Activated CD8-positive, alpha-beta T cell treated with anti-CD3 and anti-CD28 coated beads for 36 hours (primary cell): ENCODE measurements at regions of chr1 and their contacts with region 1.

Region 1: GRCh38 chr1:234531151-234531635 is 52.2 kb upstream of the TARBP1 start:
- DNase-seq: no peak
- ATAC-seq: no peak
- H3K4me3 Mint-ChIP-seq: no peak overlapping the region
- H3K27ac Mint-ChIP-seq: no peak overlapping the region
- H3K4me1 Mint-ChIP-seq: peaks cover 14% of the 10 kb centered on the region
- H3K27me3 Mint-ChIP-seq: peaks cover 10% of the 10 kb centered on the region
- CTCF ChIP-seq: no peak

Region 2: DNA sequence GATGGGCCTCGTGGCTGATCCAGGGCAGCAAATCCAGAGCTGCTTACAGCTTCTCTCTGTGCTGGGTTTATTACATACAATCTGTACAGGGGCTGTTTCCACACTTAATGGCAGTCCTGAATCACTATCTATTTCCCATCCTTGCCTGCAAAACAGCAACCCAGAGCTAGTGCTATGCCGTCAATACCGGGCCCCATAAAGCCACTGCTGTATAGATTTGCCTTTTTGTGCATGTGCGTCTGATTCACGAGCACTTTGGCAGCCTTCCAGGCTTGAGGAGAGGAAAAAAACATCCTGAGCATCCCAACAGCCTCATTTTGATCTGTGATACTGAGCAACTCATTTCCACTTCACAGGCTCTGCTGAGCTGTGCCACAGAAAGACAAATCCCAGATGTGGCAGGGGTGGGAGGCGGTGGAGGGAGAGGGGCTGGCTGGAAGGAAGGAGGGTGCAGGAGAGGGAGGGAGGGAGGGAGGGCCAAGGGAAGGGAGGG is 12.9 kb after region 1 on chr1:
- CTCF ChIA-PET with region 1: interaction called, 13 read pairs
- POLR2A ChIA-PET with region 1: interaction called, 5 read pairs
- intact Hi-C with region 1: no loop called
- DNase-seq: peak; percentile 74
- ATAC-seq: peak; percentile 75
- H3K4me3 Mint-ChIP-seq: no peak overlapping the region
- H3K27ac Mint-ChIP-seq: peak overlapping the region; percentile 81
- H3K4me1 Mint-ChIP-seq: peaks cover 19% of the 10 kb centered on the region
- H3K27me3 Mint-ChIP-seq: peaks cover 3% of the 10 kb centered on the region
- CTCF ChIP-seq: no peak